ENCODE measurements at regions of chr4 and their contacts with region 1.

Region 1: GRCh38 chr4:123564758-123565346 is 168.3 kb downstream of the SPRY1 start:
- DNase-seq: peak in 1 of 10 donors; percentile 16

Region 2: DNA sequence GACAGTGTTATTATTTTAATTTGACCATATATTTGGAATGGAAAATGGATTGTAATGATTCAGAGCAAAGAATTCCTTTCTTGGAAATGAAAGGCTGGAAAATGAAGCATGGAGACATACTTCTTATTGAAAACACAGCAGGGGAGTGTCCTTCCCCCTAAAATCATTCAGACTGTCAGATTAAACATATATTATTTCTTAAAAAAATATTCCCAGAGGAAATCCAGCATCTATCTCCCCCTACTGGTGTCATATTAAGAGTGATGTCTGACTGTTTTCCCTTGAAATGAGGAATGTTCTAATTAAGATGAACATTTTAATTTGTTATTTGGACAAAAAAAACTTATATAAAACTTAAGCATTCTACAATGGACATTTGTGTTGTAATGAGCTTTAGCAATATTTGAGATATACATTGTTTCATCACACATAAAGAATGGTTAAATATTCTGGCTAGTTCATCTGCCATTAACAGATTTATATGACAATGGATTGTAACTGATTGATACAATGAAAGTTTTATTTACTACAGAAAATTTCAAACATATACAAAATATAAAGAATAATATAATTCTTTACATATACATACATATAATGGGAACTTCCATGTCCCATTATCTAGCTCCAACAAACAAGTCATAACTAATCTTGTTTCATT is 96.4 kb after region 1 on chr4:
- intact Hi-C with region 1: loop called (anchors 5 kb)
- DNase-seq: no peak

Measured in posterior cingulate gyrus (tissue), 11 donors.